ENCODE measurements at regions of chr22 and their contacts with region 1.

Region 1: GRCh38 chr22:36301384-36301828 is 48.5 kb downstream of the APOL1 start:
- DNase-seq: peak; percentile 73 to 87 (median 78)
- H3K4me3 ChIP-seq: no peak overlapping the region
- H3K4me3 Mint-ChIP-seq: peak overlapping the region in 2 of 7 donors; percentile 43 to 85
- H3K27ac ChIP-seq: no peak overlapping the region
- H3K27ac Mint-ChIP-seq: peak overlapping the region; percentile 37 to 91 (median 79)
- H3K4me1 ChIP-seq: peaks cover 10% of the 10 kb centered on the region
- H3K4me1 Mint-ChIP-seq: peaks cover 11 to 16% (median 13%) of the 10 kb centered on the region in 3 donors
- H3K27me3 ChIP-seq: no peaks in the 10 kb centered on the region
- H3K27me3 Mint-ChIP-seq: peaks cover 0 to 3% of the 10 kb centered on the region in 2 donors

Region 2: DNA sequence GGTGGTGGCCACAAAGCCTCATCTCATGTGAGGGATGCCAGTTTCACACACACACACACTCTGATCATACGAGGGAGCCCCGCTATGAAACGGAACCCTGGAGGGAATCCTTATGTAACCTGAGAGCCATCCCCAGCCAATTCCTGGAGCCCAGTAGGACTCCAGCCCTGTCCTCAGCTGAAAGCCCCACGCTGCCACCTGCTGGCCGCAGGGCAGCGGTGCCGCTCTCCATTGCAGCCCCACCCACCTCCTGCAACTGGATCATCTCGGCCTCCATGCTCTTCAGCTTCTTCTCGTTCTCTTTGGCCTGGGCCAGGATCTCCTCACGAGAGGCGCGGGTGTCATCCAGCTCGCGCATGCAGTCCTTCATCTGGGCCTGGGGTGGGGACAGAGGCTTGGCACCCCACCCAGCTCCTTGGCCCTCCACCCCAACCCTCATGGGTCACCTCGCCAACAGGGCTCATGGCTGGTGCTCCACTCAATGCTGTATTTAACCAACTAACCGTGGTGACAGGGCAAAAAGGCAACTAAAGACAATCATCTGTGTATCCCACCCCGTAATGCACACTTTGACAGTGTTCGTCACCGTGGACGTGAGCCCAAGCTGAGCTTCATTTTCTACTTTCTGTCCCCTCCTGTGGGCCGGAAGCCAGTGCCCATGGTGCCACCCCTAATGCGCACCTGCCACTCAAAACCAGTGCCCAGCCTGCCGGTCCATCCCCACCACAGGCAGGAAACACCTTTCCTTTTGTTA is 14.8 kb before region 1 on chr22:
- CTCF ChIA-PET with region 1: interaction called, 11 read pairs
- POLR2A ChIA-PET with region 1: interaction called, 5 read pairs
- DNase-seq: peak; percentile 58 to 75 (median 61)
- H3K4me3 ChIP-seq: no peak overlapping the region
- H3K4me3 Mint-ChIP-seq: peak overlapping the region in 6 of 7 donors; percentile 22 to 77 (median 58)
- H3K27ac ChIP-seq: no peak overlapping the region
- H3K27ac Mint-ChIP-seq: peak overlapping the region; percentile 44 to 97 (median 88)
- H3K4me1 ChIP-seq: peaks cover 35% of the 10 kb centered on the region
- H3K4me1 Mint-ChIP-seq: peaks cover 36 to 47% (median 42%) of the 10 kb centered on the region in 3 donors
- H3K27me3 ChIP-seq: no peaks in the 10 kb centered on the region
- H3K27me3 Mint-ChIP-seq: peaks cover 0 to 8% of the 10 kb centered on the region in 2 donors

Region 3: GRCh38 chr22:36331306-36331911 is 30.0 kb after region 1 on chr22:
- CTCF ChIA-PET with region 1: interaction called, 47 read pairs
- POLR2A ChIA-PET with region 1: interaction called, 5 read pairs
- DNase-seq: peak; percentile 67 to 90 (median 76)
- H3K4me3 ChIP-seq: peak overlapping the region; percentile 62
- H3K4me3 Mint-ChIP-seq: peak overlapping the region; percentile 85 to 94 (median 89)
- H3K27ac ChIP-seq: peak overlapping the region; percentile 81
- H3K27ac Mint-ChIP-seq: peak overlapping the region; percentile 94 to 100 (median 99)
- H3K4me1 ChIP-seq: peaks cover 89% of the 10 kb centered on the region
- H3K4me1 Mint-ChIP-seq: peaks cover 98 to 100% (median 100%) of the 10 kb centered on the region in 3 donors
- H3K27me3 ChIP-seq: no peaks in the 10 kb centered on the region
- H3K27me3 Mint-ChIP-seq: peaks cover 0 to 3% of the 10 kb centered on the region in 2 donors

Region 4: DNA sequence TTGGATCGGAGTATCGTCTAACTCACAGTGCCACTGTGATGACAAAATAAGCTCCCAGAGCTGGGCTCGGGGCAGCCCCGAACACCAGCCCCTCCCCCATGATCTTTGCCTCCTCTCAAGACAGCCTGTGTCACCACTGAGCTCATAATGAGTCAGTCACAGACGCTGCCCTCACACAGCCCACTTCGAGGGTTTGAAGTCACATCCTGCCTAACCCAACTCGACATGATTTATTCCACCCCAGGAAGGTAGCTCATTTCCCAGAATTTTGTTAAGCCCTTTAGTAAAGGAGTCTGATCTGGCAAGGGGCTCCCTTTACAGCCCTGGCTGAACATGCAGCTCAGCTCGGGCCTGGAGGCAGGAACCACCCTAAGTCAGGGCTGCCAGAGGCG is 63.6 kb after region 1 on chr22:
- CTCF ChIA-PET with region 1: interaction called, 14 read pairs
- POLR2A ChIA-PET with region 1: no interaction called
- DNase-seq: peak; percentile 83 to 95 (median 87)
- H3K4me3 ChIP-seq: no peak overlapping the region
- H3K4me3 Mint-ChIP-seq: peak overlapping the region; percentile 39 to 84 (median 77)
- H3K27ac ChIP-seq: peak overlapping the region; percentile 73
- H3K27ac Mint-ChIP-seq: peak overlapping the region; percentile 93 to 99 (median 94)
- H3K4me1 ChIP-seq: peaks cover 98% of the 10 kb centered on the region
- H3K4me1 Mint-ChIP-seq: peaks cover 93 to 100% (median 99%) of the 10 kb centered on the region in 3 donors
- H3K27me3 ChIP-seq: no peaks in the 10 kb centered on the region
- H3K27me3 Mint-ChIP-seq: peaks cover 0 to 6% of the 10 kb centered on the region in 2 donors

Region 5: DNA sequence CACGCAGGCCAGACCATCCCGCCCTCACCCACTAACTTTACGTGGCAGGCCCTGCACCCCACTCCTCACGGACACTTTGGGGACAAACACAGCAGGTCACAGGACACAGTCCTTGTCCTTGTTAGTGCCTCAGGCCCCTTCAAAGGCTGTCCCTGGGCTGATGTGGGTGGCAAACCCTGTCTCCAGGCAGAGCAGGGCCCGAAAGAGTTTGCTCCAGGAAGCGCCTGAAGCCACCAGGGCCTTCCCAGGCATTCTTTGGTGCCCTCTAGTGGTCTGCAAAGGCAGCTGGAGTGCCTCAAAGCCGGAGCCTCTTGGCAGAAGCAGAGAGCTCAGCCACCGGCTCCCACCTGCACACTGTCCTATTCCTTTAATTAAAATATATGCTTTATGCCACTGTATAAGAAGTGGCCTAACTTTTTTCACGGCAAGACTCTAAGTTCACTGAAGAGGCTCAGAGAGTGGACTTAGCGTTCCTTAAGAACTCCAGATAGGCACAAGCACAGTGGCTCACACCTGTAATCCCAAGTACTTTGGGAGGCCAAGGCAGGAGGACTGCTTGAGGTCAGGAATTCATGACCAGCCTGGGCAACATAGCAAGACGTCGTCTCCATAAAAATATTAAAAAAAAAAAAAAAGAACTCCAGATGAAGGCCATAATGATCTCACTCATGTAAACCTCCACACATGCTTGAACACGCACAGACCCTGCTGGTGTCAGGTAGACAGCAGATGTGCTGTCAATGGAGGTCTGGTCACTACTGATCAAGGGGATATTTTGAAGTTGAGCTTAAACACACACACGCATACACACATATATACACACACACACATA is 169.0 kb after region 1 on chr22:
- CTCF ChIA-PET with region 1: interaction called, 116 read pairs
- POLR2A ChIA-PET with region 1: interaction called, 3 read pairs
- DNase-seq: peak; percentile 72 to 90 (median 83)
- H3K4me3 ChIP-seq: no peak overlapping the region
- H3K4me3 Mint-ChIP-seq: no peak overlapping the region
- H3K27ac ChIP-seq: no peak overlapping the region
- H3K27ac Mint-ChIP-seq: peak overlapping the region in 7 of 8 donors; percentile 35 to 80 (median 75)
- H3K4me1 ChIP-seq: peaks cover 21% of the 10 kb centered on the region
- H3K4me1 Mint-ChIP-seq: peaks cover 13 to 23% (median 14%) of the 10 kb centered on the region in 3 donors
- H3K27me3 ChIP-seq: no peaks in the 10 kb centered on the region
- H3K27me3 Mint-ChIP-seq: no peaks in the 10 kb centered on the region

Region 6: DNA sequence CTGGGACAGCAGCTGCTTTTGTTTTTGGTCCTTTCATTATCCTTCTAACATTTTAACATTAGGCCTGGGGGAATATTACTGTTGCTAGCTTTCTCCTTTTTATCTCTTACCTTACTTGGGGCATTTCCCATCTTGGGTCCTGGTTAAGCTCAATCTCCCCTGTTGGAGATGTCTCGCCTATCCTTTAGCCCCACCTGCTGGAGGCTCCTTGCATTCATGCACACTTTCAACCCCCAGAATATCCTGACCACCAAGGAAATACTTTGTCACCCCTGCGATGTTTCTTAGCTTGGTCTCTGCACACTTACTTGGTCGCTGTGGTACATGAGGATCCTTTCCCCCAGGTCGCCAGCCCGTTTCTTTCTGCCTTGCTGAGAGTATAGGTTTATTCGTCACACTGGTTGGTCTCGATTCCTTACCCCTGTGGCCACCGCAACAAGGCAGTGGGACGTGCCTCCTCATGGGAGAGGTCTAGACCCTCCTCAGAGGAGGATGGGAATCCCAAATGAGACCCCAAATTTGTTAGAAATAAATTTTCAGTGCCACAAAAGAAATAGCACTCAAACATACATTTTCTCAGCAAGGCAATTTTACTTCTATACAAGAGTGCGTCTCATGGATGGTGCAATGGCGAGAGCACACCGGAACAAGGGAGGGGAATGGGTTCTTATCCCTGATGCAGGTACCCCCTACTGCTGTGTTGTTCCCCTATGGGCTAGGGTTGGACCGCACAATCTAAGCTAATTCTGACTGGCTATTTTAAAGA is 185.4 kb after region 1 on chr22:
- CTCF ChIA-PET with region 1: interaction called, 56 read pairs
- POLR2A ChIA-PET with region 1: no interaction called
- DNase-seq: peak; percentile 43 to 75 (median 55)
- H3K4me3 ChIP-seq: no peak overlapping the region
- H3K4me3 Mint-ChIP-seq: peak overlapping the region in 1 of 7 donors; percentile 31
- H3K27ac ChIP-seq: no peak overlapping the region
- H3K27ac Mint-ChIP-seq: peak overlapping the region in 2 of 8 donors; percentile 67 to 87
- H3K4me1 ChIP-seq: peaks cover 6% of the 10 kb centered on the region
- H3K4me1 Mint-ChIP-seq: peaks cover 6 to 9% (median 9%) of the 10 kb centered on the region in 3 donors
- H3K27me3 ChIP-seq: no peaks in the 10 kb centered on the region
- H3K27me3 Mint-ChIP-seq: peaks cover 0 to under 1% of the 10 kb centered on the region in 2 donors

Measured in CD8-positive, alpha-beta memory T cell (primary cell).